Calu3 (cell line): ENCODE measurements at regions of chr6 and their contacts with region 1.

Region 1: GRCh38 chr6:100160912-100161311 is 166.9 kb upstream of the MCHR2 start:
- DNase-seq: no peak
- H3K4me3 Mint-ChIP-seq: no peak overlapping the region
- H3K27ac Mint-ChIP-seq: no peak overlapping the region
- H3K4me1 Mint-ChIP-seq: no peaks in the 10 kb centered on the region
- H3K27me3 Mint-ChIP-seq: no peaks in the 10 kb centered on the region
- CTCF ChIP-seq: no peak

Region 2: GRCh38 chr6:100105138-100105753 is 55.7 kb before region 1 on chr6:
- CTCF ChIA-PET with region 1: no interaction called
- intact Hi-C with region 1: no loop called
- DNase-seq: no peak
- H3K4me3 Mint-ChIP-seq: no peak overlapping the region
- H3K27ac Mint-ChIP-seq: no peak overlapping the region
- H3K4me1 Mint-ChIP-seq: peaks cover 8% of the 10 kb centered on the region
- H3K27me3 Mint-ChIP-seq: no peaks in the 10 kb centered on the region
- CTCF ChIP-seq: no peak

Region 3: GRCh38 chr6:100126790-100127484 is 34.0 kb before region 1 on chr6:
- CTCF ChIA-PET with region 1: interaction called, 13 read pairs
- intact Hi-C with region 1: no loop called
- DNase-seq: no peak
- H3K4me3 Mint-ChIP-seq: no peak overlapping the region
- H3K27ac Mint-ChIP-seq: no peak overlapping the region
- H3K4me1 Mint-ChIP-seq: no peaks in the 10 kb centered on the region
- H3K27me3 Mint-ChIP-seq: no peaks in the 10 kb centered on the region
- CTCF ChIP-seq: no peak